Activated naive CD4-positive, alpha-beta T cell treated with anti-CD3 and anti-CD28 coated beads for 36 hours (primary cell): ENCODE measurements at regions of chr10 and their contacts with region 1.

Region 1: DNA sequence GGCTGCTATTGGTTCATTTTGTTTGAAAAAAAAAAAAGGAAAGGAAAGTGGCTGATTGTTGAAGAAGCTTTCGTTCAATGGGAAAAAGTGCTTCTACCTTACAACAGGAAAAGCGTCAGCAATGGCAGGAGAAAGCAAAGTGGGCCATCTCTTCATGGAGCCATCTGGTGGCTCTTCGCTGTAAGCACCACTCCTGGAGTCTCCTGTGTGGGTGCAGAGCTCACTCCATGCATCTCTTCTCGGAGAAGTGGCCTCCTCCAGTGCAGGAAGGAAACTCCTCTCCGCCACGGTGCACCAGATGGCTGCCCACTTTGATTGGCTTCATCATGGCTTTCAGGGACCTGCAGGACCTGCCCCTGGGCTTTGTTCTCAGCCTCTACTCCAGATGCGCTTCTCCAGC is 250.9 kb downstream of the PTEN start:
- DNase-seq: peak; percentile 45
- H3K4me3 Mint-ChIP-seq: no peak overlapping the region
- H3K27ac Mint-ChIP-seq: no peak overlapping the region
- H3K4me1 Mint-ChIP-seq: peaks cover 8% of the 10 kb centered on the region
- H3K27me3 Mint-ChIP-seq: peaks cover 10% of the 10 kb centered on the region

Region 2: DNA sequence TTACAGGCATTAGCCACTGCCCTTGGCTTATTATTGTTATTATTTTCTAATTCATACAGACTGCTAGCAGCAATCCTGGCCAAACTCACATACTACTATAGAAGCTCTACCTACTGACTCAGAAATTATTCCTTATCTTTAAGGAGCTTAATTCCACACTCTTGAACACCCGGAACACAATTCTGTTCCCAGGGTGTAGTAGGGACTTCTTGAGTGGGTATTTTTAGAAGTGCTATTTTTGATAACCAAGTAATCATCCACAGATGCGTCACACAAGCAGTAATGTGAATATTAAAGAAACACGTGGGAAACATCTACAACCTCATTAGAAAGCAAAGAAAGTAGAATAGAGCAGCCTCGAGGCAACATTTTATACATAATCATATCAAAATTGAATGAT is 101.7 kb before region 1 on chr10:
- CTCF ChIA-PET with region 1: no interaction called
- intact Hi-C with region 1: no loop called
- DNase-seq: no peak
- H3K4me3 Mint-ChIP-seq: no peak overlapping the region
- H3K27ac Mint-ChIP-seq: no peak overlapping the region
- H3K4me1 Mint-ChIP-seq: no peaks in the 10 kb centered on the region
- H3K27me3 Mint-ChIP-seq: no peaks in the 10 kb centered on the region

Region 3: DNA sequence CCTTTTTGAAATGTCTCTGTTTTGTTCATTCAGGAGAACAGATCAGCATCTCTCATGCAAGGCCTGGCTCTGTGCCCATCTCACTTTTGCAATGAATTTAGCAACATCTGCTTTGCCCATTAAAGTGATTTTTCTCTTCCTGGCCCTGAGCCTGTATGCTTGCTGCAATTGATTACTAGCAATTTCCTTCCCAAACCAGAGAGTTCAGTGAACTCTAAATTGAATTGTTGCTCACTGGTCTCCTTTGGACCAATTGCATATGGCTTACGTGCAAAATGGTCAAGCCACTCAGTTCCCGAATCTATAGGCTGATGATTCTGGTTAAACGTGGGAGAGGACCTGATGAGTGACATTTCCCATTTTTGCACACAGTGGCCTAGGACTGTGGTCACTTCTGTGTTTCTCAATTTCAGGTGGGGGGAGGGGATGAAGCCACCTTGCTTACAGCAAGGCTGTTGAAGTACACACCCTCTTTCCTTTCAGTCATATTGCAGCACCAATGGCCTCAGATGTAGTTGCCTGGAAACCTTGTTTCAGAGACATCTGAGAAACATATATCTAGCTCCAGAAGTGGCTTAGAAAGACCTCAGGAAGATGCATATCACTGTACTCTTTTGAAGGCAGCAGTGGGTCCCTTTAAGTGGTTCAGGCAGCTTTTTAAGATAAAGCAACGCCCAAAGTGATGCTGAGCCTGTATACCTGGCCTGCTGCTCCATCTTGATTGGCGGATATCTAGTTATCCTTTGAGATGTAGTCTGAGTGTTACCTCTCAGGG is 49.6 kb before region 1 on chr10:
- CTCF ChIA-PET with region 1: interaction called, 3 read pairs
- intact Hi-C with region 1: loop called (anchors 1 kb)
- DNase-seq: peak; percentile 34
- H3K4me3 Mint-ChIP-seq: no peak overlapping the region
- H3K27ac Mint-ChIP-seq: no peak overlapping the region
- H3K4me1 Mint-ChIP-seq: peaks cover 68% of the 10 kb centered on the region
- H3K27me3 Mint-ChIP-seq: peaks cover 11% of the 10 kb centered on the region

Region 4: DNA sequence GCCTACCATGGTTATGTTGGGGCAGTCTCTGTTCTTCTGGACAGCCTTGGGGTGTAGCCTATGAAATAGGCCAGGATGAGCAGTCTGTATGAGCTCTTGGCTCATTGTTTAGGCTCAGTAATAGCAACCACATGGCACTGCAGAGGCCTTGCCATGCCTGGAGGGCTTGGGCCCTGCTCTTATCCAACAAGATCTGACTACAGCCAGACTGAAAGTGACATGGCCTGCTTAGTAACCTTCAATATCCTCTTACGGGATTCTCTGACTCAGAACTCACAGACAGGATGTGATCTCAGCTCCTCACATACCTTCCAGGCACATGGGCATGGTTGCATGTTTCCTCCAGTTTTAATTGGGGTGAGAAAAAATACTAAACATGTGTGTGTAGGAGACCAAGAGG is 38.4 kb after region 1 on chr10:
- CTCF ChIA-PET with region 1: no interaction called
- intact Hi-C with region 1: loop called (anchors 1 kb)
- DNase-seq: peak; percentile 76
- H3K4me3 Mint-ChIP-seq: no peak overlapping the region
- H3K27ac Mint-ChIP-seq: peak overlapping the region; percentile 86
- H3K4me1 Mint-ChIP-seq: peaks cover 22% of the 10 kb centered on the region
- H3K27me3 Mint-ChIP-seq: no peaks in the 10 kb centered on the region

Region 5: DNA sequence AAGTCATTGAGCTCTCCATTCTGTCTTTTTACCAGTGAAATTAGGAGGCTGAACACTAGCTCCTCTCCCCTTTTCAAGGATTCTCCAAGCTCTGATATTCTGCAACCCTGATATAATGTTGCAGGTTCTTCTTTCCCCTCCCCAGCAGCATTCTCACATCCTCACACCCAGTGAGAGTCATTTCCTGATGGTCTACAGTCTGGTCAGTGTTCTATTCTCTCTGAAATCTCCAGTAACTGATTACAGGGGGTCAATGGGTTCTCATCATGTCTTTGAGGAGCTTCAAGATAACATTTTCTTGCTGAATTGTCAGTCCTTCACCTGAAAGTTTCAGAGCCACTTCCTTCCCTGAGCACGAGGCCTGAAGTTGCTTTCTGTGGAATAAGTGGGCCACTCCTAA is 48.5 kb after region 1 on chr10:
- CTCF ChIA-PET with region 1: no interaction called
- intact Hi-C with region 1: no loop called
- DNase-seq: no peak
- H3K4me3 Mint-ChIP-seq: no peak overlapping the region
- H3K27ac Mint-ChIP-seq: no peak overlapping the region
- H3K4me1 Mint-ChIP-seq: peaks cover 2% of the 10 kb centered on the region
- H3K27me3 Mint-ChIP-seq: no peaks in the 10 kb centered on the region

Region 6: GRCh38 chr10:88361494-88361893 is 247.1 kb after region 1 on chr10:
- CTCF ChIA-PET with region 1: no interaction called
- intact Hi-C with region 1: no loop called
- DNase-seq: no peak
- H3K4me3 Mint-ChIP-seq: no peak overlapping the region
- H3K27ac Mint-ChIP-seq: no peak overlapping the region
- H3K4me1 Mint-ChIP-seq: no peaks in the 10 kb centered on the region
- H3K27me3 Mint-ChIP-seq: no peaks in the 10 kb centered on the region

Region 7: GRCh38 chr10:88386821-88387773 is 272.7 kb after region 1 on chr10:
- CTCF ChIA-PET with region 1: interaction called, 7 read pairs
- intact Hi-C with region 1: loop called (anchors 2 kb)
- DNase-seq: peak; percentile 7
- H3K4me3 Mint-ChIP-seq: no peak overlapping the region
- H3K27ac Mint-ChIP-seq: no peak overlapping the region
- H3K4me1 Mint-ChIP-seq: peaks cover 25% of the 10 kb centered on the region
- H3K27me3 Mint-ChIP-seq: no peaks in the 10 kb centered on the region